ENCODE measurements at regions of chr9 and their contacts with region 1.

Region 1: DNA sequence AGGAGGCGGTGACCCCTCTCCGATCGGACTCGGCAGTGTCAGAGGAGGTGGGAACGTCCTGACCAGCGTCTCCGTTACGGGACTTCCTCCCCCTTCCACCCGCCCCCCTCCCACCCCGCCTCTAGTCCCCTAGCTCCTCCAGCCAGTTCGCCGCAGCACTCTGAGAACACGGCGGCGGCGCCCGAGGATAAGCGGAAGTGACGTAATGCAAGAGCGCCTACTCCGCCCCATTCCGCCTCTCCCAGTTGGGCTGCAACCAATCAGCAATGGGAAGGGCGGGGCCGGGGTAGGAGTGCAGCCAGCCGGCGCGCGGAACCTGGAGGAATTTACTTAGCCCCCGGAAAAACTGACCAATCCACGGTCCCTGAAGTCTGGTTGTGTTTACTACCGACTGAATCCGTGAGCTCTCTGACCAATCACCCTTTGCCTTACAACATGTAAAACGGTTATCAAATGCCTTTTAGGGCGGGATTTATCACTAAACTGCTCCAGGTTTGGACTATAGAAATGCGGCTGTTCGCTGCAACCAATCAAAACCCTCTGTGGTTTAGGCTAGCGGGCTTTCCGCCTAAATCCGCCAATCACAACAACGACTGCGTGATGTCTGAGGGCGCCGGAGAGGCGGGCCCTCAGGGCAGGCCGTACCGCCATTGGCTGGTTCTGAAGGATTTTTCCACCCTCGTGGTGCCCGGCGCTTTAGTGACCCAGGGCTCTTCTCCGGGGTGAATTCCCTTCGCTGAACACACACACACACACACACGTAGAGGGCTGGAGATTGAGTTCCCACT is at the start of gene ZBTB5:
- DNase-seq: peak; percentile 99 to 100 (median 99)
- ATAC-seq: peak; percentile 89 to 93 (median 92)
- H3K4me3 ChIP-seq: peak within 1 kb of the TSS; percentile 68 to 99 (median 92)
- H3K27ac ChIP-seq: peak within 1 kb of the TSS; percentile 86 to 99 (median 97)
- H3K4me1 ChIP-seq: peaks cover 0 to 40% (median 25%) of the 10 kb centered on the region in 12 donors
- H3K27me3 ChIP-seq: no peaks in the 10 kb centered on the region
- CTCF ChIP-seq: no peak
- POLR2A ChIP-seq: peak in 1 of 2 donors; percentile 92
- total RNA-seq, gene ZBTB5: 5.2 to 8.0 (median 6.3) TPM

Region 2: DNA sequence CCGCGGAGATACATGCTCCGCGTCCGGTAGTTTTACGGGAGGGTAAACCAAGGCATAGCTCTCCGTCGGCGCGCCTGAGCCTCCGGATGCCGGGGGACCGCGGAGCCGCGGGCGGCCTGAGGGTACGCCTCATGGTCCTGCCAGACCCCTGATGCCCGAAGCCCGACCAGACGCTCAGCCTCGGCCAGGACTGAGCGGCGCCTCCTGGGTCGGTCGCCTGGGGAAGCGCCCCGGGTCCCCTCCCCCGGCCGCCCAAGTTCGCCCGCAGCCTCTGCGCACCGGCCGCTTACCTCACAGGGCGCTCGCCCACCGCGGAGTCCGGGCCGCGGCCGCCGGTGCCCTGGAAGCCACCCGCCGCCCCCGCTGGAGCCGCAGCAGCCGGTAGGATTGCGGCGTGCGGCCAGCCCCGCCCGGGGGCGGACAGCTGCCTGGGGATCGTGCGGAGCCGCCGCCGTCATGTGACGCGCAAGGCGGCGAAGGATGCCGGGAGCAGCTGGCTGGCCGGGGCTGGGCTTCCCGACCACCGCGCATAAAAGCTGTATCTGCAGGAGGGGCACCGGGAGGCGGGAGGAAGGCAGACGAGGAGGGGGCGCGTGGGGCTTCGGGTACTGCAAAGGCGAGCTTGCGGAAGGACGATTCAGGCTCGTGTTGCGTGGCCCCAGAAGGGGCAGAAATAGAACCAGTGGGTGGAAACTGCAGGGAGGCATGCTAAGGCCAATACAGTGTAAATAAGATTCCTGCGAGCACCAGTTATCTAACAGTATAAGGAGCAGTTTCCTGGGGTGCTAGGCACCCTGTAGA is 110.7 kb after region 1 on chr9 and contains the start of gene FBXO10:
- intact Hi-C with region 1: loop called in 1 of 10 experiments (anchors 2 kb)
- DNase-seq: peak; percentile 69 to 86 (median 78)
- ATAC-seq: peak; percentile 81 to 97 (median 95)
- H3K4me3 ChIP-seq: peak within 1 kb of the TSS; percentile 68 to 98 (median 82)
- H3K27ac ChIP-seq: peak within 1 kb of the TSS; percentile 27 to 90 (median 80)
- H3K4me1 ChIP-seq: peaks cover 0 to 24% (median 18%) of the 10 kb centered on the region in 12 donors
- H3K27me3 ChIP-seq: no peaks in the 10 kb centered on the region
- CTCF ChIP-seq: peak in 1 of 12 donors; percentile 4
- POLR2A ChIP-seq: peak in 1 of 2 donors; percentile 64
- total RNA-seq, gene FBXO10: 5.5 to 9.8 (median 7.3) TPM